ENCODE measurements at regions of chr12 and their contacts with region 1.

Region 1: DNA sequence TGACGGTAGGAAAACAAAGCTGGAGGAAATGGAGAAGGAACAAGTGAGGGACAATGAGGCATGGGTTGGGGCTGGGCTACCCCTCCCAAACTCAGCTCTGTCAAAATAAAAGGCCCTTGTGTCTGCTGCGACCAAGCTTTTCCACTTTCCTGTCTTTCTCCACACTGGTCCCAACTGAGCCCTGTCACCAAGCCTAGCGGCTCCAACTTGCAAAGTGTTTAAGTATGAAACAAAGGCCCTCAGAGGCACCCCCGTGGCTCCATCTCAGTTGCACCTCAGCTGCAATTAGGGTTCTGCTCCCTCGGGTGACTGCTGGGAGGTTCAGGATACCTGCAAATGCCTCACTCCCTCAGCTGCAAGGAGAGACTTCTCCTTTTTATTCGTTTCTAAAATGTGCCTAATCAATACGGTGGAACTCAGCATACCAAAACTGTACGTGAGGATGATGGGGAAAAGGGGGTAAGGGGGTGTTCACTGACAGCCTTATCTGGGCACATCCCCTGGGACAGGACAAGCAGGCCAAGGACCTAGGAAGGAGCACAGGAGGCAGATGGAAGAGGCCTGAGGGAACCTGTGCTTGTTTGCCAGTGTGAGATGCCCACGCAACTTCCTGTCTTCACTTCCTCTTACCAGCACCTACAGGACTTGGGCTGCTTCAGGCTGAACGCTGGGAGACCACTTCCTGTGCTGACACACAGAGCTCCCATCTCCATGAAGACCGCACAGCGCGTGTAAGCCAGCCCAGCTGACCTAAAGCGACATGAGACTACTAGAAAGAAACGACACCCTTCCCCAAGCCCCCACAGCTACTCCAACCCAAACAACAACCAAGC is 8.9 kb downstream of the VAMP1 start:
- DNase-seq: peak; percentile 96
- H3K4me3 ChIP-seq: peak overlapping the region; percentile 44
- H3K27ac ChIP-seq: peak overlapping the region; percentile 93
- H3K4me1 ChIP-seq: peaks cover 57% of the 10 kb centered on the region
- CTCF ChIP-seq: no peak; the same call in 1 of the 2 replicates

Region 2: DNA sequence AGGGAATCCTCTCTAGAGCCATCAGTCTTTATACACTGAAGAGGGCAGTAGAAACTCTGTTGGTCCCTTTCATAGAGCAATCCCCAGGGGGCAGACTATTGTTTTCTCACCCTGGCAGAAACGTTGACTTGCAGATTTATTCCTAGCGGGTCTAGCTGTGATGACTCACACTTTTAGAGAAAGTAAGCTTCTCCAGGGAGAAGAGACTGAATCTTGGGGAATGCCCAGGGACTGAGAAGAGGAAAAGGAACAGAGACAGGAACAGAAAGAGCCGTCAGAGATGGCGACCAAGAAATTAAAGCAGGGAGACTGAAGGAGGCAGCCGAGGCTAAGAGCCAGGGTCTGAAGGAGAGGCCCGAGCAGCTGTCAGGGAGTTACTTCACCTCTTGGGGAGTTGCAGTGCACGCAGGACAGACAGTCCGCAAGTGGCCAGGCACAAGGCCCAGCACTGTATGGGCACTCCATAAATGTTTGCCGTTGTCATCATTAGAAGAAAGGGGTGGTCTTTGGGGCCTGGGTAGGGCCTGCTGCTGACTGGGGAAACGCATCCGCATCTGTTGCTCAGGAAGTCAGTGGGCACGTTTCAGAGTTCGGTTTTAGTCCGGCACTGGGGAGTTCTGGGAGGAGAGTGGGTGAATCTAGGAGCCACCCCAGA is 138.2 kb before region 1 on chr12:
- CTCF ChIA-PET with region 1: no interaction called
- POLR2A ChIA-PET with region 1: no interaction called
- intact Hi-C with region 1: loop called (anchors 5 kb)
- DNase-seq: peak; percentile 77
- H3K4me3 ChIP-seq: peak overlapping the region; percentile 34
- H3K27ac ChIP-seq: peak overlapping the region; percentile 59
- H3K4me1 ChIP-seq: peaks cover 30% of the 10 kb centered on the region
- CTCF ChIP-seq: peak; percentile 88

Region 3: DNA sequence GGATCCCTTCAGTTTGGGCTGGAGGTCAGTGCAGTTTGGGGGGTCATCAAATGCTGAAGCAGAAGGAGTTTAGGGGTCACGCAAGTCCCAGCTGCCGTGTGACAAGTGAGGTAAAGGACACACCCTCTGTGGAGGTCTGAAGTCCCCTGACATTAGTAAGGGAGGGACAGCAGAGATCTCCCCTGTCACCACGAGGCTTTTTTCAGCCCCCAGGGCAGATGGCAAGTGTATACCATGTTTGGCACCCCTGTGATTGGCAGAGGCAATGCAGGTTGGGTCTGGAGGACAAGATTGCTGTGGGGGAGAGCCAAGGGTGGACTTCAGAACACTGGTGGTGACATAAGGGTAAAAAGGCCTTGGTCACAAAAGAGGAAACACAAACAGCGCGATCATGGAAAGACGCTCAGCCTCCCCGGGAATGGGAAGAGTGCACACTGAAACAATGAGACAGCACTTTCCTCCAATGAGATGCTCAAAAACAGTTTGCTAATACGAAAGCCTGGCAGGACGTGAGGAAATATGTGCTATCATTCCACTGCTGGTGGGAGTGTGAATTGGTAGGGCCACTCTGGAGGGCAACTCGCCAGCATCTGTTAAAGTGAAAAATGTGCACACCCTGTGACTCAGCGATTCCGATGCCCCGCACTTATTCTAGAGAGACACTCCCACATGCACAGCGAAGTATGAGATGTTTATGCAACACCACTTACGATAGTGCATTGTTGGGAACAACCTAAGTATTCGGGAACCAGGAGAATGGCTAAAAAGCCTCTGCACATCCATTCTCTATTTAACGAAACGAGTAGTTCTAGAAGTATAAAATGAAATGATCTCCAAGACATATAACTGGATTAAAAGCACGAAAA is 31.3 kb before region 1 on chr12:
- CTCF ChIA-PET with region 1: interaction called, 34 read pairs
- POLR2A ChIA-PET with region 1: interaction called, 24 read pairs
- intact Hi-C with region 1: loop called (anchors 1 kb)
- DNase-seq: peak; percentile 41
- H3K4me3 ChIP-seq: peak overlapping the region; percentile 6
- H3K27ac ChIP-seq: peak overlapping the region; percentile 68
- H3K4me1 ChIP-seq: peaks cover 90% of the 10 kb centered on the region
- CTCF ChIP-seq: no peak

Region 4: GRCh38 chr12:6443361-6443983 is 18.1 kb before region 1 on chr12:
- CTCF ChIA-PET with region 1: interaction called, 8 read pairs
- POLR2A ChIA-PET with region 1: interaction called, 112 read pairs
- intact Hi-C with region 1: loop called (anchors 1 kb)
- DNase-seq: peak; percentile 85
- H3K4me3 ChIP-seq: peak overlapping the region; percentile 41
- H3K27ac ChIP-seq: peak overlapping the region; percentile 96
- H3K4me1 ChIP-seq: peaks cover 73% of the 10 kb centered on the region
- CTCF ChIP-seq: no peak

Region 5: DNA sequence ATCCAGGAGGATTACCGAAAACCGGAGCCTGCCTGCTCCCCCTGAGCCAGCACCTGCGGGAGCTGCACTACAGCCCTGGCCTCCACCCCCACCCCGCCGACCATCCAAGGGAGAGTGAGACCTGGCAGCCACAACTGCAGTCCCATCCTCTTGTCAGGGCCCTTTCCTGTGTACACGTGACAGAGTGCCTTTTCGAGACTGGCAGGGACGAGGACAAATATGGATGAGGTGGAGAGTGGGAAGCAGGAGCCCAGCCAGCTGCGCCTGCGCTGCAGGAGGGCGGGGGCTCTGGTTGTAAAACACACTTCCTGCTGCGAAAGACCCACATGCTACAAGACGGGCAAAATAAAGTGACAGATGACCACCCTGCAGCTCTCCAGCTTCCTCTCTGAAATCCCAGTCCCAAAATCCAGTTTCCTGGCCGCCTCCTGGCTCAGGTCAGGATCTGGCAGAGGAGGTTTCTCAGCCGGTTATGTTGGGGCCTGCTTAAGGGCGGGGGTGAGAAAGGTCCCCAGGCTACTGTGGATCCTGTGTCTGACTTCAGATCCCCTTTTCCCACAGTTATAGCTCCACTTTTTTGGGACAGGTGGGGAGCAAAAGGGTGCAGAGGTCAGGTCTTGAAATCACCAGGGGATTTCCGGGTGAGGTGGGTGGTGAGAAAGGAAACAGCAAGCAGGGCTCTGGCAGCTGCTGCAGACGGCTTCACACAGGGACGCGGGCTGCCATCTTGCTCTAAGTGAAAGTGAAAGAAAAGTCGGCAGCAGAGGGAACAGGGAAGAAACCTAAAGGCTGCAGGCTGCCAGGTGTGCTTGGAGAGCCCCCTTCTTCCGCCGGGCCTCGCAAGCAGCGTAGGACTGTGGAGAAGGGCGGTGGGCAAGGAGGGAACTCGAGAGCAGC is 10.0 kb before region 1 on chr12 and contains the start of gene TAPBPL:
- CTCF ChIA-PET with region 1: interaction called, 10 read pairs
- POLR2A ChIA-PET with region 1: interaction called, 112 read pairs
- intact Hi-C with region 1: loop called (anchors 1 kb)
- DNase-seq: peak; percentile 89
- H3K4me3 ChIP-seq: peak within 1 kb of the TSS; percentile 74
- H3K27ac ChIP-seq: peak within 1 kb of the TSS; percentile 81
- H3K4me1 ChIP-seq: peaks cover 56% of the 10 kb centered on the region
- CTCF ChIP-seq: no peak
- total RNA-seq, gene TAPBPL: 18.4 and 23.7 TPM in 2 replicates

Measured in OCI-LY7 (cell line).